Posterior cingulate gyrus (tissue), 11 donors: ENCODE measurements at regions of chr20 and their contacts with region 1.

Region 1: GRCh38 chr20:3218307-3218988 is 9.2 kb downstream of the ITPA start:
- DNase-seq: peak in 6 of 10 donors; percentile 42 to 93 (median 54)

Region 2: DNA sequence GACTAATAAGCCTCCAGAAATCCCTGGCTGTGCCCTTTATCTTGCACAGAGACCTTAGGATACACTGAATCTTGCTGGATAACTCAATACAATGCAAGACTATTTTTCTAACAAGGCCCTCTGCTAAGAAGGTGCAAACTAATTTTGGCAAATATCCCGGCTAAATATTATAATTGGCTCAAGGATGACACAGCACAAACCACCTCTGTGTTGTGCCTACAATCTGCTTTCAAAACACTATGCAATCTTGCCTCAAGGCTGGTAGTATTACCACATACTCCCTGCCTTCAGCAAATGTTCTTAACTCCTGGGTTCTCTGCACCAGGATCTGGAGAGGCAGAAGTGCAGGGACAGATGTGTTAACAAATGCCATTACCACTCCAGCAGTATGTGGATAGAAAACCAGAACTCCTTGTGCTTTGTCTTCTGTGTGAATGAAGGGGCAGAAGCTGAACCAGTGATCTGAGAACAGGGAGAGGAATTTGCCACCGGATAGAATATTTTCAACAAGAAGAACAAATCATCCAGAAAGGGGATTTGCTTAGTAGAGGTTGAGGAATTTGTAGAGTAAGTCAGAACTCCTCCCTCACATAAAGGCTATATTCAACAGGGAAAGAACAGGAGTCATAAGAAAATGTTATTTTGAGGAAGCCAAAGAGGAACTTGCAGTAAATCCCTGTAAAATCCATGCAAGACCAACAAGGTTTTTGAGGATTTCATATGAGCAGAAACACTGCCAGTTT is 94.7 kb after region 1 on chr20:
- intact Hi-C with region 1: loop called (anchors 1 kb)
- DNase-seq: no peak

Region 3: GRCh38 chr20:3452690-3453089 is 234.2 kb after region 1 on chr20:
- intact Hi-C with region 1: no loop called
- DNase-seq: no peak